MCF 10A (cell line): ENCODE measurements at regions of chr6 and their contacts with region 1.

Region 1: GRCh38 chr6:87472525-87473418 is at the start of gene SLC35A1:
- DNase-seq: peak; percentile 75
- H3K4me3 Mint-ChIP-seq: peak within 1 kb of the TSS; percentile 93
- H3K27ac Mint-ChIP-seq: peak within 1 kb of the TSS; percentile 98
- H3K4me1 Mint-ChIP-seq: peaks cover 8% of the 10 kb centered on the region
- H3K27me3 Mint-ChIP-seq: peaks cover 7% of the 10 kb centered on the region
- CTCF ChIP-seq: no peak
- total RNA-seq, gene SLC35A1: 10.3 and 12.1 TPM in 2 replicates

Region 2: GRCh38 chr6:87016772-87017171 is 456.0 kb before region 1 on chr6:
- CTCF ChIA-PET with region 1: no interaction called
- POLR2A ChIA-PET with region 1: no interaction called
- intact Hi-C with region 1: no loop called
- DNase-seq: no peak
- H3K4me3 Mint-ChIP-seq: no peak overlapping the region
- H3K27ac Mint-ChIP-seq: no peak overlapping the region
- H3K4me1 Mint-ChIP-seq: no peaks in the 10 kb centered on the region
- H3K27me3 Mint-ChIP-seq: peaks cover 26% of the 10 kb centered on the region
- CTCF ChIP-seq: no peak

Region 3: GRCh38 chr6:87407901-87408720 is 64.7 kb before region 1 on chr6 and contains the start of gene CFAP206:
- CTCF ChIA-PET with region 1: no interaction called
- POLR2A ChIA-PET with region 1: interaction called, 28 read pairs
- intact Hi-C with region 1: loop called (anchors 2 kb)
- DNase-seq: peak; percentile 76
- H3K4me3 Mint-ChIP-seq: peak within 1 kb of the TSS; percentile 80
- H3K27ac Mint-ChIP-seq: peak within 1 kb of the TSS; percentile 37
- H3K4me1 Mint-ChIP-seq: no peaks in the 10 kb centered on the region
- H3K27me3 Mint-ChIP-seq: peaks cover 15% of the 10 kb centered on the region
- CTCF ChIP-seq: peak; percentile 19
- total RNA-seq, gene CFAP206: 0.27 TPM in 1 of 2 replicates, not detected in the other

Region 4: GRCh38 chr6:87574292-87574691 is 101.5 kb after region 1 on chr6:
- CTCF ChIA-PET with region 1: no interaction called
- POLR2A ChIA-PET with region 1: no interaction called
- intact Hi-C with region 1: no loop called
- DNase-seq: peak; percentile 24
- H3K4me3 Mint-ChIP-seq: no peak overlapping the region
- H3K27ac Mint-ChIP-seq: peak overlapping the region; percentile 4
- H3K4me1 Mint-ChIP-seq: peaks cover 32% of the 10 kb centered on the region
- H3K27me3 Mint-ChIP-seq: no peaks in the 10 kb centered on the region
- CTCF ChIP-seq: no peak